ENCODE measurements at regions of chr3 and their contacts with region 1.

Region 1: GRCh38 chr3:58025837-58026569 is 17.8 kb downstream of the FLNB start:
- DNase-seq: no peak
- H3K4me3 Mint-ChIP-seq: no peak overlapping the region
- H3K27ac Mint-ChIP-seq: no peak overlapping the region
- H3K4me1 Mint-ChIP-seq: peaks cover 62% of the 10 kb centered on the region
- H3K27me3 Mint-ChIP-seq: no peaks in the 10 kb centered on the region

Region 2: GRCh38 chr3:57927916-57928315 is 98.1 kb before region 1 on chr3:
- CTCF ChIA-PET with region 1: no interaction called
- POLR2A ChIA-PET with region 1: no interaction called
- DNase-seq: no peak
- H3K4me3 Mint-ChIP-seq: no peak overlapping the region
- H3K27ac Mint-ChIP-seq: no peak overlapping the region
- H3K4me1 Mint-ChIP-seq: peaks cover 3% of the 10 kb centered on the region
- H3K27me3 Mint-ChIP-seq: no peaks in the 10 kb centered on the region

Region 3: DNA sequence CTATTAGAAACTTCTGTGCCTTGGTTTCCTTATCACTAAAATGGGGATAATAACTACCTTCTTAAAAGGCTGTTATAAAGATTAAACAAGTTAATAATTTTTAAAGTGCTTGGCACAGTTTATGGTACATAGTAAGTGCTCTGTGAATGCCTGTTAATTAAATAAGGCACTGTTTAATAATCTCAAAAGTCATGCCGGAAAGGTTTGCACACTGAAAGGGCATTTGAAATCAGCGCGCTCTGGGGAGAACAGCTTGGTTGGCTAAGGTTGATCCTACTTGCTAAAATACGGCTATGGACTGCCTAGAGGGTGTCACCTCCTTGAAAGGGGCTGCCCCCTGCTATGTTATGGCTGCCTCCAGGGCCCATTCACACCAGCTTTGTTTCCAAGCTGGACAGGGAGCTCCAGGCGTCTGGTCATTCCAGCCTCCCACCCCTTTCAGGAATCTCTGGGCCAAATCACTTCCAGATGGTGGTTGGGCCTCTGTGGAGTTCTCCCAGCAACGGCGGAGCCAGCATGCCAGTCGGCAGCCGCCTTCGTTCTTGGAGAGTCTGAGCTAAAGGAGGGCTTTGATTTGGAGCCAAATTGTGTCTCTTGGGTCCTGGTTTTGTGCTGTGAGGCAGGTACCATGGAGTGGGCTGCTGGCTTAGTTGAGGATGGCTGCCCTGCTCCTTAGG is 11.9 kb before region 1 on chr3:
- CTCF ChIA-PET with region 1: interaction called, 25 read pairs
- POLR2A ChIA-PET with region 1: interaction called, 15 read pairs
- DNase-seq: no peak
- H3K4me3 Mint-ChIP-seq: no peak overlapping the region
- H3K27ac Mint-ChIP-seq: no peak overlapping the region
- H3K4me1 Mint-ChIP-seq: peaks cover 53% of the 10 kb centered on the region
- H3K27me3 Mint-ChIP-seq: no peaks in the 10 kb centered on the region

Region 4: GRCh38 chr3:58084788-58085543 is 59.0 kb after region 1 on chr3:
- CTCF ChIA-PET with region 1: no interaction called
- POLR2A ChIA-PET with region 1: no interaction called
- DNase-seq: no peak
- H3K4me3 Mint-ChIP-seq: no peak overlapping the region
- H3K27ac Mint-ChIP-seq: peak overlapping the region; percentile 36
- H3K4me1 Mint-ChIP-seq: peaks cover 26% of the 10 kb centered on the region
- H3K27me3 Mint-ChIP-seq: no peaks in the 10 kb centered on the region

Measured in activated CD4-positive, alpha-beta memory T cell treated with anti-CD3 and anti-CD28 coated beads, Interleukin-2, amount 10 ng/mL, durations not matched to agents 7 days and 5 days (primary cell).